ENCODE measurements at regions of chr13 and their contacts with region 1.

Region 1: GRCh38 chr13:27997904-27998522 is 9.5 kb upstream of the URAD start:
- DNase-seq: no peak
- H3K4me3 ChIP-seq: no peak overlapping the region
- H3K4me3 Mint-ChIP-seq: no peak overlapping the region
- H3K27ac ChIP-seq: no peak overlapping the region
- H3K27ac Mint-ChIP-seq: peak overlapping the region in 1 of 7 donors; percentile 13
- H3K4me1 ChIP-seq: no peaks in the 10 kb centered on the region
- H3K4me1 Mint-ChIP-seq: peaks cover 0 to 3% (median 0%) of the 10 kb centered on the region in 4 donors
- H3K27me3 ChIP-seq: no peaks in the 10 kb centered on the region
- H3K27me3 Mint-ChIP-seq: peaks cover 0 to 8% of the 10 kb centered on the region in 2 donors

Region 2: GRCh38 chr13:27977476-27978300 is 20.3 kb before region 1 on chr13:
- CTCF ChIA-PET with region 1: interaction called, 26 read pairs
- POLR2A ChIA-PET with region 1: no interaction called
- intact Hi-C with region 1: no loop called
- DNase-seq: no peak
- H3K4me3 ChIP-seq: no peak overlapping the region
- H3K4me3 Mint-ChIP-seq: peak overlapping the region in 2 of 8 donors; percentile 54 to 71
- H3K27ac ChIP-seq: no peak overlapping the region
- H3K27ac Mint-ChIP-seq: no peak overlapping the region
- H3K4me1 ChIP-seq: peaks cover 11% of the 10 kb centered on the region
- H3K4me1 Mint-ChIP-seq: peaks cover 9 to 42% (median 21%) of the 10 kb centered on the region in 4 donors
- H3K27me3 ChIP-seq: peaks cover 19% of the 10 kb centered on the region
- H3K27me3 Mint-ChIP-seq: peaks cover 68 to 74% of the 10 kb centered on the region in 2 donors

Region 3: GRCh38 chr13:28012896-28013295 is 14.9 kb after region 1 on chr13:
- CTCF ChIA-PET with region 1: no interaction called
- POLR2A ChIA-PET with region 1: no interaction called
- intact Hi-C with region 1: no loop called
- DNase-seq: no peak
- H3K4me3 ChIP-seq: no peak overlapping the region
- H3K4me3 Mint-ChIP-seq: no peak overlapping the region
- H3K27ac ChIP-seq: no peak overlapping the region
- H3K27ac Mint-ChIP-seq: no peak overlapping the region
- H3K4me1 ChIP-seq: no peaks in the 10 kb centered on the region
- H3K4me1 Mint-ChIP-seq: no peaks in the 10 kb centered on the region
- H3K27me3 ChIP-seq: no peaks in the 10 kb centered on the region
- H3K27me3 Mint-ChIP-seq: peaks cover 10 to 27% of the 10 kb centered on the region in 2 donors

Region 4: GRCh38 chr13:29000826-29001225 is 1002.8 kb after region 1 on chr13:
- CTCF ChIA-PET with region 1: no interaction called
- POLR2A ChIA-PET with region 1: no interaction called
- intact Hi-C with region 1: no loop called
- DNase-seq: no peak
- H3K4me3 ChIP-seq: no peak overlapping the region
- H3K4me3 Mint-ChIP-seq: peak overlapping the region in 1 of 8 donors; percentile 38
- H3K27ac ChIP-seq: no peak overlapping the region
- H3K27ac Mint-ChIP-seq: no peak overlapping the region
- H3K4me1 ChIP-seq: no peaks in the 10 kb centered on the region
- H3K4me1 Mint-ChIP-seq: no peaks in the 10 kb centered on the region
- H3K27me3 ChIP-seq: no peaks in the 10 kb centered on the region
- H3K27me3 Mint-ChIP-seq: peaks cover 5 to 7% of the 10 kb centered on the region in 2 donors